ENCODE measurements at regions of chr17 and their contacts with region 1.

Region 1: DNA sequence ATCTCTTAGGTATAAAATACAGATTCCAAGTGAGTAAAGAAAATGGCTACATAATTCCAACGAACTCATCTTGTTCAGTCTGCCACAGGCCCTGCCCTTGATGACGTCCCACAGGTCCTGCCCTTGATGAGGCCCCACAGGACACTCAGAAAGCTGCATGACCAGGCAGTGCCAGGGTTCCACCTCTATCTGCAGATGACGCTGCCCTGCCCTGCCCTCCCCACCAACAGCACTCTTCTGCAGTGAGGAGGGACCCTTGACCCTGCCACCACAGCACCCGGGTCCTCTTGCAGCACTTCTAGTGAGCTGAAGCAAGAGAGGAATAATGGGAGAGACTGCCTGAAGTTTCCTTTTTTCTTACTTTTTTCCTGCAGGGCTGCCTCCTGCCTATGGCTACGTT is 118.4 kb downstream of the VPS53 start:
- DNase-seq: no peak
- ATAC-seq: peak; percentile 63
- H3K4me3 ChIP-seq: no peak overlapping the region
- H3K27ac ChIP-seq: no peak overlapping the region
- H3K4me1 ChIP-seq: no peaks in the 10 kb centered on the region; the same call in 1 of the 2 replicates
- H3K27me3 ChIP-seq: no peaks in the 10 kb centered on the region
- CTCF ChIP-seq: no peak

Region 2: GRCh38 chr17:499951-500461 is 96.3 kb before region 1 on chr17:
- CTCF ChIA-PET with region 1: no interaction called
- POLR2A ChIA-PET with region 1: interaction called, 10 read pairs
- in situ Hi-C with region 1: no loop called
- intact Hi-C with region 1: no loop called
- DNase-seq: no peak
- ATAC-seq: no peak
- H3K4me3 ChIP-seq: no peak overlapping the region
- H3K27ac ChIP-seq: no peak overlapping the region
- H3K4me1 ChIP-seq: no peaks in the 10 kb centered on the region
- H3K27me3 ChIP-seq: no peaks in the 10 kb centered on the region
- CTCF ChIP-seq: no peak

Region 3: GRCh38 chr17:676060-676700 is 79.9 kb after region 1 on chr17:
- CTCF ChIA-PET with region 1: no interaction called
- POLR2A ChIA-PET with region 1: no interaction called
- in situ Hi-C with region 1: no loop called
- intact Hi-C with region 1: no loop called
- DNase-seq: no peak
- ATAC-seq: no peak
- H3K4me3 ChIP-seq: no peak overlapping the region
- H3K27ac ChIP-seq: no peak overlapping the region
- H3K4me1 ChIP-seq: no peaks in the 10 kb centered on the region
- H3K27me3 ChIP-seq: no peaks in the 10 kb centered on the region
- CTCF ChIP-seq: no peak